ENCODE measurements at regions of chrX and their contacts with region 1.

Region 1: GRCh38 chrX:153609917-153610428 is 11.0 kb upstream of the CCNQ start:
- DNase-seq: peak; percentile 46
- H3K4me3 Mint-ChIP-seq: peak overlapping the region; percentile 69
- H3K27ac Mint-ChIP-seq: no peak overlapping the region
- H3K4me1 Mint-ChIP-seq: peaks cover 5% of the 10 kb centered on the region
- H3K27me3 Mint-ChIP-seq: peaks cover 13% of the 10 kb centered on the region

Region 2: GRCh38 chrX:153361781-153362397 is 248.1 kb before region 1 on chrX:
- intact Hi-C with region 1: no loop called
- DNase-seq: no peak
- H3K4me3 Mint-ChIP-seq: no peak overlapping the region
- H3K27ac Mint-ChIP-seq: no peak overlapping the region
- H3K4me1 Mint-ChIP-seq: peaks cover 1% of the 10 kb centered on the region
- H3K27me3 Mint-ChIP-seq: peaks cover 3% of the 10 kb centered on the region

Region 3: DNA sequence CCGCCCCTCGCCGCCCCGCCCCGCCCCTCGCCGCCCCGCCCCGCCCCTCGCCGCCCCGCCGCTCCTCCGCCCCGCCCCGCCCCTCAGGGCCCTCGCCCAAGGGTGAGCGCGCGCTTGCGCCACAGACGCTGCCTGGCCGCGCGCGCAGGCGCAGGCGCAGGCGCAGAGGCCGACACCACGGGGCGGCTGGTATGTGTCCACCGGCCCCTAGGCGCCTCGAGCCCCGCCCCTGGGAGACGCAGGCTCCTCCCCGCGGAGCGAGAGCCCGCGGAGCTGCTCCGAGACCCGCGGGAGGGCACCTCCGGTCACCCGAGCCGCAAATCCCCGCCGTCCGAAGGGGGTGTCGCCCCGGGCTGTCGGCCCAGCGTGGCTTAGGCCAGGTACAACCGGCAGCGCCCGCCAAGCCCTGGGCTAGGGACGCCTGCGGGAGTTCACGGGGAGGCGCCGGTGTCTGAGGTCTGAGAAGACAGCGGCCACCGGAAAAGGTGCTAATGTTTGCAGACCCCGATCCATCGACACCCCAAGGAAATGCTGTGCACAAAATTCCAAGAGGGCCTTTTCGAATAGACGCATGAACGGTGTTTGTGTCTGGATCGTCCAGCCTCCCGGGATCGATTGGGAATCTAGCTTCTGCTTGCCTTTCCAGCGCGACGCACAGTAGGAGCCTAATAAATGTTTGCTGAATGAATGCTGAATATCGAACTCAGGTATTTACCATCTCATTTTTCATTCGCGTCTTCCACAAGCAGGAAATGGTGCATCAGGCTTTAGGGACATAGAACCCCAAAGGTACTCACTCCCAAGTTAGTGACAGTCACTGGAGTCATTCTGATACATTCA is 10.6 kb before region 1 on chrX:
- intact Hi-C with region 1: no loop called
- DNase-seq: peak; percentile 83
- H3K4me3 Mint-ChIP-seq: peak overlapping the region; percentile 87
- H3K27ac Mint-ChIP-seq: peak overlapping the region; percentile 60
- H3K4me1 Mint-ChIP-seq: peaks cover 25% of the 10 kb centered on the region
- H3K27me3 Mint-ChIP-seq: no peaks in the 10 kb centered on the region

Region 4: GRCh38 chrX:153662266-153662665 is 52.3 kb after region 1 on chrX:
- intact Hi-C with region 1: loop called (anchors 5 kb)
- DNase-seq: peak; percentile 22
- H3K4me3 Mint-ChIP-seq: no peak overlapping the region
- H3K27ac Mint-ChIP-seq: no peak overlapping the region
- H3K4me1 Mint-ChIP-seq: no peaks in the 10 kb centered on the region
- H3K27me3 Mint-ChIP-seq: peaks cover 41% of the 10 kb centered on the region

Measured in activated T-helper 2 cell treated with anti-CD3 and anti-CD28 coated beads, Interferon-gamma antibody, Interleukin-2, Interleukin-4, amounts not matched to agents 10 μg/mL and 5 μg/mL and 100 μg/mL, durations not matched to agents 14 hours and 24 hours and 36 hours (primary cell).